ENCODE measurements at regions of chr17 and their contacts with region 1.

Region 1: DNA sequence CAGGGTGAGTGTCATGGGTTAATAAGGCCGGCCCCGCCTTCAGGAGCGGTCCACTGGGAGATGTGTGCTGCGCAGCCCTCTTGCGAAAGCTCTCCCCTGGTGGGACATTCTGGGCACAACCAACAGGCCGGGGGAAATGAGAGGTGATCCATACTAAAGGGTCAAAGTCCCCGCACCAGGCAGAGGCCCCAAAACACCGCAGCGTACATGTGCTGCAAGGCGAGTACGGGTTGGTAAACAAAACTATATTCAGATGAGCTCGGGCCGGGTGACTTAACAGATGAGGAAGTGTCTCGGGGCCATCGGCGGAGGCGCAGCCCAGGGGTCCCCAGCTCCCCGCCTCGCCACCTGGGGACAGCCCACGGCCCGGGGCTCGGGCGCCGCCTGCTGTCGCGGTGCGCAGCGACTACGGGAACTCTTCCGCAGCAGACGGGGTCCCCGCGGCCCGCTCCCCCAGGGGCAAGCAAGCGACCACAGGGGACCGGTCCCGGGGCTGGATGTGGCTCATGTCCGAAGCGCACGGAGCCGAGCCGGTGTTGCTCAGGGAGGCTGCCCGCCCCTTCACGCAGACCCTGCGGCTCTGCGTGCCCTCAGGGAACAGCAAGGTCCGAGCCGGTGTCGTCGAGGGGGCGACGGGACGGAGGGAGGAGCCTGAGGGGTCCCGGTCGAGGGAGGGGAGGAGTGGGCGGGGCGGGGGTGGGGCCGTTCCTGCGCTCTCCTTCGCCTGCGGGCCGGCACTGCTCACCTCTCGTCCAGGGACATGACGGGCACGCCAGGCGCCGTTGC is at the start of gene RAB37:
- DNase-seq: peak; percentile 53
- H3K4me3 Mint-ChIP-seq: peak within 1 kb of the TSS; percentile 77
- H3K27ac Mint-ChIP-seq: peak within 1 kb of the TSS; percentile 86
- H3K4me1 Mint-ChIP-seq: peaks cover 43% of the 10 kb centered on the region
- H3K27me3 Mint-ChIP-seq: no peaks in the 10 kb centered on the region
- total RNA-seq, gene RAB37: 6.5 to 7.0 TPM

Region 2: GRCh38 chr17:74566132-74566753 is 170.5 kb before region 1 on chr17:
- CTCF ChIA-PET with region 1: interaction called, 18 read pairs
- POLR2A ChIA-PET with region 1: no interaction called
- intact Hi-C with region 1: no loop called
- DNase-seq: peak; percentile 48
- H3K4me3 Mint-ChIP-seq: no peak overlapping the region
- H3K27ac Mint-ChIP-seq: no peak overlapping the region
- H3K4me1 Mint-ChIP-seq: peaks cover 11% of the 10 kb centered on the region
- H3K27me3 Mint-ChIP-seq: peaks cover 27% of the 10 kb centered on the region

Region 3: DNA sequence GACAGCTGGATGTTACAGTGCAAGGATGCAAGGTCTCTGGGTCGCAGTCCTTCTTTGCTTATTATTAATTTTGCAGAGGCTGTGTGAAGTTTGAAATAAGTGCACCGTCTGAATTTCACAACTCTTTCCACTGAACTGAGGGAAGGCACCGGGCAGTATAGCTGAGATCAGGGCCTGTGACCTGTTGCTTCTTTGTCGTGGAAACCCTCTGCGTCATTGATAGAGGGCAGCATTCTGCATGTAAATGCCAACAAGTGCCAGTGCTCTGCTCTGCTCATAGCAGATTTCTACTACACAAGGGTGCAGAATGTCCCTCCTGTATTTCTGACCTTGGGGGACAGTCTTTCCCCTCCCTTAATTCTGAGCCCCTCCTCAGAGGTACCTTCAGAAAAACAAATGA is 49.9 kb before region 1 on chr17:
- CTCF ChIA-PET with region 1: interaction called, 4 read pairs
- POLR2A ChIA-PET with region 1: interaction called, 4 read pairs
- intact Hi-C with region 1: loop called (anchors 5 kb)
- DNase-seq: no peak
- H3K4me3 Mint-ChIP-seq: no peak overlapping the region
- H3K27ac Mint-ChIP-seq: no peak overlapping the region
- H3K4me1 Mint-ChIP-seq: peaks cover 4% of the 10 kb centered on the region
- H3K27me3 Mint-ChIP-seq: peaks cover 8% of the 10 kb centered on the region

Region 4: GRCh38 chr17:74759243-74759801 is 22.6 kb after region 1 on chr17:
- CTCF ChIA-PET with region 1: interaction called, 48 read pairs
- POLR2A ChIA-PET with region 1: no interaction called
- intact Hi-C with region 1: no loop called
- DNase-seq: peak; percentile 73
- H3K4me3 Mint-ChIP-seq: peak overlapping the region; percentile 23
- H3K27ac Mint-ChIP-seq: peak overlapping the region; percentile 85
- H3K4me1 Mint-ChIP-seq: peaks cover 69% of the 10 kb centered on the region
- H3K27me3 Mint-ChIP-seq: no peaks in the 10 kb centered on the region

Region 5: GRCh38 chr17:74776044-74776977 is 39.6 kb after region 1 on chr17 and contains the start of gene NAT9:
- CTCF ChIA-PET with region 1: interaction called, 33 read pairs
- POLR2A ChIA-PET with region 1: interaction called, 7 read pairs
- intact Hi-C with region 1: no loop called
- DNase-seq: peak; percentile 99
- H3K4me3 Mint-ChIP-seq: peak within 1 kb of the TSS; percentile 97
- H3K27ac Mint-ChIP-seq: peak within 1 kb of the TSS; percentile 89
- H3K4me1 Mint-ChIP-seq: peaks cover 71% of the 10 kb centered on the region
- H3K27me3 Mint-ChIP-seq: no peaks in the 10 kb centered on the region
- total RNA-seq, gene NAT9: 42.9 to 46.9 TPM

Region 6: GRCh38 chr17:74842599-74843351 is 106.1 kb after region 1 on chr17:
- CTCF ChIA-PET with region 1: no interaction called
- POLR2A ChIA-PET with region 1: no interaction called
- intact Hi-C with region 1: no loop called
- DNase-seq: peak; percentile 32
- H3K4me3 Mint-ChIP-seq: no peak overlapping the region
- H3K27ac Mint-ChIP-seq: no peak overlapping the region
- H3K4me1 Mint-ChIP-seq: peaks cover 12% of the 10 kb centered on the region
- H3K27me3 Mint-ChIP-seq: peaks cover 6% of the 10 kb centered on the region

Region 7: GRCh38 chr17:74873038-74873873 is 136.6 kb after region 1 on chr17:
- CTCF ChIA-PET with region 1: interaction called, 10 read pairs
- POLR2A ChIA-PET with region 1: interaction called, 9 read pairs
- intact Hi-C with region 1: no loop called
- DNase-seq: peak; percentile 100
- H3K4me3 Mint-ChIP-seq: peak overlapping the region; percentile 80
- H3K27ac Mint-ChIP-seq: peak overlapping the region; percentile 93
- H3K4me1 Mint-ChIP-seq: peaks cover 25% of the 10 kb centered on the region
- H3K27me3 Mint-ChIP-seq: no peaks in the 10 kb centered on the region

Measured in activated CD4-positive, alpha-beta memory T cell treated with anti-CD3 and anti-CD28 coated beads for 36 hours (primary cell).